ENCODE measurements at regions of chr18 and their contacts with region 1.

Region 1: DNA sequence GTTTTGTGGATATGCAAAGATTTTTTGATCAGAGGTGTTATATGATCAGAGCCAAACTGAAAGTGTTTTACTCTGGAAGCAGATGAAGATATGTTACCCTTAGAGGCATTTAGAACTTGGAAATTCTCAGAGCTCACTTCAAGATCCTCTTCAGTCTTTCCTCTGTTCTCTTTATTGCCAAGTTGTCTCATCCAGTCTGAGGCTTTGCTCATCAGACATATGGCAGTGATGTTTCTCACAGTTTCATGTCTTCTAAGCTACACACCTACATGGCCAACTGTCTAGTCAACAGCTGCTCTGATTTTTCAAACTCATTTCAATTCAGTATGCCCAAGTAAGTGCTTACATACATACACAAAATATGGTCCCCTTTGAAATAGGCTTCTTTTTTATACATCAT is 1504.3 kb upstream of the PIK3C3 start:
- DNase-seq: no peak
- H3K4me3 ChIP-seq: no peak overlapping the region
- H3K27ac ChIP-seq: no peak overlapping the region
- H3K4me1 ChIP-seq: no peaks in the 10 kb centered on the region
- H3K27me3 ChIP-seq: no peaks in the 10 kb centered on the region
- CTCF ChIP-seq: no peak

Region 2: GRCh38 chr18:40402052-40402451 is 48.7 kb before region 1 on chr18:
- CTCF ChIA-PET with region 1: no interaction called
- dilution Hi-C with region 1: no loop called
- in situ Hi-C with region 1: no loop called
- intact Hi-C with region 1: no loop called
- DNase-seq: no peak
- H3K4me3 ChIP-seq: no peak overlapping the region
- H3K27ac ChIP-seq: no peak overlapping the region
- H3K4me1 ChIP-seq: no peaks in the 10 kb centered on the region
- H3K27me3 ChIP-seq: no peaks in the 10 kb centered on the region
- CTCF ChIP-seq: no peak

Region 3: GRCh38 chr18:40485318-40485717 is 34.6 kb after region 1 on chr18:
- CTCF ChIA-PET with region 1: no interaction called
- dilution Hi-C with region 1: no loop called
- in situ Hi-C with region 1: no loop called
- intact Hi-C with region 1: no loop called
- DNase-seq: peak; percentile 48
- H3K4me3 ChIP-seq: no peak overlapping the region
- H3K27ac ChIP-seq: no peak overlapping the region
- H3K4me1 ChIP-seq: peaks cover 5% of the 10 kb centered on the region
- H3K27me3 ChIP-seq: no peaks in the 10 kb centered on the region
- CTCF ChIP-seq: no peak

Region 4: GRCh38 chr18:40631319-40631718 is 180.6 kb after region 1 on chr18:
- CTCF ChIA-PET with region 1: no interaction called
- dilution Hi-C with region 1: no loop called
- in situ Hi-C with region 1: no loop called
- intact Hi-C with region 1: no loop called
- DNase-seq: no peak
- H3K4me3 ChIP-seq: no peak overlapping the region
- H3K27ac ChIP-seq: no peak overlapping the region
- H3K4me1 ChIP-seq: no peaks in the 10 kb centered on the region
- H3K27me3 ChIP-seq: no peaks in the 10 kb centered on the region
- CTCF ChIP-seq: no peak

Region 5: GRCh38 chr18:41940506-41941215 is 1489.9 kb after region 1 on chr18:
- CTCF ChIA-PET with region 1: no interaction called
- dilution Hi-C with region 1: no loop called
- in situ Hi-C with region 1: no loop called
- intact Hi-C with region 1: loop called (anchors 5 kb)
- DNase-seq: peak; percentile 72
- H3K4me3 ChIP-seq: no peak overlapping the region
- H3K27ac ChIP-seq: no peak overlapping the region
- H3K4me1 ChIP-seq: peaks cover 6% of the 10 kb centered on the region
- H3K27me3 ChIP-seq: no peaks in the 10 kb centered on the region
- CTCF ChIP-seq: no peak